Posterior cingulate gyrus (tissue), 11 donors: ENCODE measurements at regions of chr9 and their contacts with region 1.

Region 1: DNA sequence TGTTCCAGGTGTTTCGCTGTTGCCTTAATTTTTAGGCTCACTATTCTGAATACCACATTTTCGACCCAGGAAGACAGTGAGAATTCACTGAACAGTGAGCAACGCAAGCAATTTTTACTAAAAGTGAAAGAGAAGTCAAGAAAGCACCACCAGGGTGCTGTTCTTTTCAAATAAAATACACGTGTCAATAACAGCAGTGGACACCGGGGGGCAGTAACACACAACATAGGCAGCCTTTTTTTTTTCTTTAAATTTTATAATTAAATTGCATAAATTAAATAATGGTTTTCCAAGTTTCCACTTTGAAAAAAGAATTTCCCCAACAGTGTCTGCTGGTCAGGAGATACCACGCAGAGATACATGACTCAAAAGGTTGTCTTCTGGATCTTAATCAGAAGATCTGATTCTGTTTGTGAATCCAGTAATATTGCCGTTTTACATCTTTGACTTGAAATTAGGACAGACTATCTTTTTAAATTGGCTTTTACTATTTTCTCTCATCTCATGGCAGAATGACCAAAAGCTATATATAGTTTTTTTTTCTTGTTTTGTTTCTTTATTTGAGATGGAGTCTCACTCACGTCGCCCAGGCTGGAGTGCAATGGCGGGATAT is 47.1 kb upstream of the SH3GL2 start:
- DNase-seq: peak in 5 of 10 donors; percentile 22 to 81 (median 23)

Region 2: DNA sequence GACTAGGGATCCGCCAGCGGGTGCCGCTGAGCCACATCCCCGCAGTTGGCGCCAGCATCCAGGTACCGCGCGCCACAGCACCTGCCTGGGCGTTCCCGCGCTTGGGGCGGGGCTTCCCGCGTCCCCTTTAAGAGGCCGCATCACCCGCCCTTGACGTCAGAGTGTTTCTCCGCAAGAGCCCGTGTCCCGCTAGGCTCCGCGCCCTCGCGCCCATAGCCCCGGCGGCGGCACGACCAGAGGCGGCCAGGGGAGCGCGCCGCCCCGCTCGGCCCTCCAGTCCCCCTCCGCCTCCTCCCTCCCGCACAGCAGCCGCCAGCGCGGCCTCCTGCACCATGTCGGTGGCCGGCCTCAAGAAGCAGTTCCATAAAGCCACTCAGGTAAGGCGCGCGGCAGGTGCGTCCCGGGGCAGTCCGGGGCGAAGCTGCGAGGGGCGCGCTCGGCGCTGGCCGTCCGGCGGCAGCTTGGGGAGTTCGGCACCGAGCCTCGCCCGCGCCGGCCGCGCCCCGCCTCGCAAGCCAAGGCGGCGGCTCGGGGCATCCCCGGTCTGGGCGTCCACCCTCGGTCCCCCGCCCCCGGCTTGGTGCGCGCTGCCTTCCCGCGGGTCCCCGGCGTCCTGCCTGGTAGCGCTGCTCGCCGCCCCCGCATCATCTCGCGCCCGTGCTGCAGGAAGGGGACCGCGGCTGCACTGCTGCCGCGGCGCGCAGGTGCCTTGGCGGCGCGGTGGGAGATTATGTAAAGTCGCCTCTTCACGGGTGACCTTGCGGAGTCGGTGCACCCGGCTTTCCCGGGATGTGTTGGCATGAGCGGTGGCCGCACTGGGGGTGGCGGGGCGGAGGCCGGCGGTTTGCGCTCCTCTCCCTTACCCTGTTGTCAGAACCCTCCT is 47.4 kb after region 1 on chr9 and contains the start of gene SH3GL2:
- intact Hi-C with region 1: no loop called
- DNase-seq: peak; percentile 34 to 96 (median 77)

Region 3: DNA sequence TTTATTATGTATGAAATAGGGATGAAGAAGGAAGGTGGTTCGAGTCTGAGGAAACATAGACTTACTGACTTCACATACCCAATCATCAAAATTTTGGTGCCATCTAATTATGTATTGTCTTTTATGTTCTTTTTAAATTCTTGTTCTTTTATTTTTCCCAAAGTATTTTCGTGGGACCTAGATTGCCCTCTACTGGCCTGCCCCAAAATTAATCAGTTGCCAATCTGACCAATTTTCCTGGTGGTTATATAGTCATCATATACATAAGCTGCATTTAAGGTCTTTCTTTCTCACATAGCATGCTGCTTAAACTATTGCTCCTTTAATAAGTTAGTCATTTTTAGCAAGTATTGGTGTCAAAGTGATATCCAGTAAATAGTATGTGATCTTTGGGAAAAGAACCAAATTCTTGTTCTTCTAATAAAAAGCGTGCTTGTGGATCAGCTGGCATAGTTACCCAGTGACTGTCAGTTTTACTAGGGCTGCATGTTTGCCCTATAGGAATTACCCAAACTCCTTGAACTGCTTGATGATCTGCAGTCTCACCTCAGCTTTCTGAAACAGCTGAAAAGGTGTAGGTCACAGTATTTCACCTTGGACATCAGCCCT is 270.6 kb after region 1 on chr9:
- intact Hi-C with region 1: loop called (anchors 5 kb)
- DNase-seq: no peak

Region 4: DNA sequence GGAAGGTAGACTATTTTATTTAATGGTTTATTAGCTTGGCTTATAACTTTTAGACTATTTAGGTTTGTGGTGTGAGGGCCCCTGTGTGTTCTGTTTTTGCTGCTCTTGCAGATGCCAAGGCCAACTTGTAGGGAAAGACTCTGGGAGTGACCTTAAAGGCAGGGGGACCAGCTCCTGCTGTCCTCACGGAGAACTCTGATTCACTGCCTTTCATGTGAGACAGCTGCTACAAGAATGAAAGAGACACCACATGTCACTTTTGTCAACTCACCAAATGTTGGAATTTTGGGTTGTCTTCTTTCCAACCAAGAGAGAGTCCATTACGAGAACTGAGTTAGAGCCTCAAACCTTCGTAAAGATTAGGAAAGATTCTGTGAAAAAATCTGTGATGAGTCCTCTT is 683.9 kb after region 1 on chr9:
- intact Hi-C with region 1: loop called (anchors 2 kb)
- DNase-seq: no peak